Cardiac septum (tissue), 1 donor: ENCODE measurements at regions of chr6 and their contacts with region 1.

Region 1: GRCh38 chr6:108558372-108559096 is 2.2 kb upstream of the FOXO3 start:
- DNase-seq: peak; percentile 99

Region 2: GRCh38 chr6:108655806-108656651 is 97.5 kb after region 1 on chr6:
- intact Hi-C with region 1: loop called (anchors 2 kb)
- DNase-seq: no peak

Region 3: DNA sequence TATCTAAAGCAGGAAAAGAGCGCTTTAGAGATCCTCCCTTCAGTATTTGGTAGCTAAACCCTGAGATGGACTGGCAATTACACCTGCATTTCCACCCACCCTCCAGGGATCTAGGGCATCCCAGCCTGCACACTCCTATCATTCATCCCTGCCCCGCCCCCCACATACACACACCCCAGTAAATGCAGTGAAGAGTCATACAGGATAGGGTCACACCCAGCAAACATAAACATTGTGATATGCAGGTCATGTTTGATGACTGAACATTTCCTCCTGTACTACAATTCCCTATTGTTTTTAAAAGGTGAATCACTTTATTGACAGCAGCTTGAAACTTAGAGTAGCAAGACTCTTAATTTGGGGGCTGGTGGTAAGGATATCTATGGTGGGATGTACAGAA is 115.1 kb after region 1 on chr6:
- intact Hi-C with region 1: no loop called
- DNase-seq: no peak

Region 4: DNA sequence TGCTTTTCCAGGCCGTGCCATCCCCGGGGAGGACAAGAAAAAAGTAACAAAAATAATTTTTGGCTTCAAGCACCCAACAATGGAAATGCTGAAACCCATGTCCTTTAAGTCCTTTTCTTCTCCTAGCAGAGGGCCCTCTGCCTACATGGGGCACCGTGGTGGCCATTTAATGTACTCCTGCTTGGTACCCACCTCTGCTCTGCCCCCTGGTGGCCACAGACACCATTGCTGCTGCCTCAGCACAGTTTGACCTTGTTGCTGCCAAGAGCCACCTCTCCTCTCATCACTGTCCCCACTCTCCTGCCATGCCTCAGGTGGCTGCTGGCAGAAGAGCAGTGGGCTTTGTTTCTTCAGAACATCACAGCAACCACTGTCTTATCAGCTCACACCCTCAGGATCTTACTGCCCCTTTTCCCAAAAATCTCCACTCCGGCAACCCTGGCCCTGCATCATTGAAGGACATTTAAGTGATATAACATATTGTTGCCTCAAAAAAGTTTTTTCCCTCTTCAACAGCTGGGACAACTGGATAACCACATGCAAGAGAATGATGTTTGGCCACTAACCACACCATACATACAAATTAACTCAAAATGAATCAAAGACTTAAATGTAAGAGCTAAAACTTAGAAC is 276.8 kb after region 1 on chr6:
- intact Hi-C with region 1: loop called (anchors 5 kb)
- DNase-seq: peak; percentile 95

Region 5: GRCh38 chr6:109073344-109074132 is 515.0 kb after region 1 on chr6:
- intact Hi-C with region 1: loop called (anchors 5 kb)
- DNase-seq: no peak

Region 6: GRCh38 chr6:109382576-109383437 is 824.3 kb after region 1 on chr6:
- intact Hi-C with region 1: loop called (anchors 10 kb)
- DNase-seq: peak; percentile 97